Esophagus squamous epithelium (tissue), 5 donors: ENCODE measurements at regions of chr18 and their contacts with region 1.

Region 1: DNA sequence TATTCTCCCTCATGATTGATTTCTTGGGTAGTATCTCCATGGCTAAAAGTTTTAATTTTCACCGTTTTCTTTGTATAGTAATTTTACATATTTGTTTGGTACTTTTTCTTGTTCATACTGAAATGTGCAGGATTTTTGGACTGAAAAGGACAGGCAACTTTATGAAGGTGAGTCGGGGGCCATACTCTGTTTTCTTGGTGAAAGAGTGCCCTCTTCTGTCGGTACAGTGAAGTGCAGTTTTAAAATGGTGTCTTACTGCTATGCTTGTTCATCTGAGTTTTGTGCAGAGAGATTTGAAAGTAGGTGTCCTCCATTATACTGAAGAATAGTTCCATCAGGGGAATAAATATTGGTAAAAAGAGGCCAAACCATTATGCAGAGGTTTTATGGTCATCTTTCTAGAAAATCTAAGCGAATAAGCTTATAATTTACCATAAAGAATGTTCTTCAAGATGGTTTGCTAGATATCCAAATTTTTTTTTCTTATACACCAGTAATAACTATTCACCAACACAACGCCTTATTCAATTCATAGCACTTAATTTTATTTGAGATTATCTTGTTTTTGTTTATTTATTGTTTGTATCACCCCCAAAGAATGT is 8.7 kb upstream of the SERPINB13 start:
- DNase-seq: no peak
- H3K4me3 ChIP-seq: no peak overlapping the region
- H3K27ac ChIP-seq: peak overlapping the region in 2 of 4 donors; percentile 7 to 12
- H3K4me1 ChIP-seq: peaks cover 0 to 26% (median 0%) of the 10 kb centered on the region in 3 donors
- H3K27me3 ChIP-seq: no peaks in the 10 kb centered on the region
- CTCF ChIP-seq: peak; percentile 34 to 88 (median 75)
- POLR2A ChIP-seq: no peak

Region 2: DNA sequence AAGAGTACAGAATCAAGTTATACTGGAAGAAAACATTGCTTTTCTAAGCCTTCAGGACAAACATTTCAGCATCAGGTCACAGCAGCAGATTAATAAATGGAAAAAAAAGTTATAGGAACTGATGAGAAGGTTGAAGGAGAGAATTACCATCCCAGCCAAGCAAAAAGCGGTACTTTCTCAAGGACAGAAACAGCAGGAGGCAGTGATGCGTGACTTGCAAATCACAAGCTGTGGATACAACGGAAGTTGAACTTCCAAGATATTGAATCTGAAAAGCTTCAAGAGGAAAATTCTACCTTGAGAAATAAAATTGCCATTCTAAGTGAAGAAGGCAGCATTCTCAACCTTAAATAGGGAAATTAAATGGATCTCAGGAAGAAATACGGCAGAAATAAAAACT is 54.8 kb before region 1 on chr18:
- intact Hi-C with region 1: loop called (anchors 5 kb)
- DNase-seq: no peak
- H3K4me3 ChIP-seq: no peak overlapping the region
- H3K27ac ChIP-seq: no peak overlapping the region
- H3K4me1 ChIP-seq: peaks cover 0 to 24% (median 0%) of the 10 kb centered on the region in 3 donors
- H3K27me3 ChIP-seq: no peaks in the 10 kb centered on the region
- CTCF ChIP-seq: no peak
- POLR2A ChIP-seq: no peak